BJ (cell line): ENCODE measurements at regions of chr11 and their contacts with region 1.

Region 1: GRCh38 chr11:103108933-103109817 is at the start of gene DYNC2H1:
- DNase-seq: peak; percentile 66
- H3K4me3 ChIP-seq: peak within 1 kb of the TSS; percentile 93
- H3K27me3 ChIP-seq: no peaks in the 10 kb centered on the region
- CTCF ChIP-seq: peak; percentile 65
- polyA plus RNA-seq, gene DYNC2H1: 6.1 and 11.0 TPM in 2 replicates

Region 2: DNA sequence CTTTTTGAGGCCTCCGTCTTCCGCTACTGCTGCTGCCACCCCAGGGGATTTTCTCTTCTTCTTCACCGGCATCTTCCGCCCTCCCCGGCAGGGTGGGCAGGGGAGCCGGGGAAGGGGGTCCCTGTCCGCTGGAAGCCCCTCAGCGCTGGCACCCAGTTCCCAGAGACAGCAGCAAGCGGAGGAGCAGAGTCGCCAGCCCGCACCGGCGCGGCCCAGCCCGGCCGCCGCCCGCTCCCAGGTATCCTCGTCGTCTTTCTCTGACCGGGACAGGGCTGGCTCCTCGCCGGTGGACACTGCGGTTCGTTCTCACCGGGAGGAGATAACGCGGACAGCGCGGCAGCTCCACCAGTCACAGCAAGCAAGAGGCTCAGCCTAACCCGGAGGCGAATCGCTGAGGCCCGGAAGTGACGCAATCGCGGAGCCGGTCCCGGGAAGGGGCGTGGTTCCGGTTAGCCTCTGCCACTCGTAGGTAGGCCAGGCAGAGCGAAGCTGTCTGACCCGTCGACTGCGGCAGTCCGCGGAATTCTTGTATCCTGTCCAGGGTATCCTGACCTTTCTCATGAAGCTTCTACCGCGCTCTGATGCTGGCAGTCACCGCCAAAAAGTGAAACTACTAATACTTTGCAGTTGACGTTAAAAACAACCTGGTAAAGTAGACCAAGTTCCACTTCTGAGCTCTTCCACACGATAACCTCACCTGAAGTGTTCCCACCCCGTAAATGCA is 17.2 kb before region 1 on chr11 and contains the start of gene DCUN1D5:
- CTCF ChIA-PET with region 1: interaction called, 17 read pairs
- POLR2A ChIA-PET with region 1: interaction called, 4 read pairs
- DNase-seq: peak; percentile 74
- H3K4me3 ChIP-seq: peak within 1 kb of the TSS; percentile 89
- H3K27me3 ChIP-seq: no peaks in the 10 kb centered on the region
- CTCF ChIP-seq: no peak
- polyA plus RNA-seq, gene DCUN1D5: 27.7 and 39.9 TPM in 2 replicates

Region 3: GRCh38 chr11:103097279-103097678 is 11.9 kb before region 1 on chr11:
- CTCF ChIA-PET with region 1: interaction called, 17 read pairs
- POLR2A ChIA-PET with region 1: interaction called, 4 read pairs
- DNase-seq: no peak
- H3K4me3 ChIP-seq: no peak overlapping the region
- H3K27me3 ChIP-seq: no peaks in the 10 kb centered on the region
- CTCF ChIP-seq: no peak